ENCODE measurements at regions of chr11 and their contacts with region 1.

Region 1: DNA sequence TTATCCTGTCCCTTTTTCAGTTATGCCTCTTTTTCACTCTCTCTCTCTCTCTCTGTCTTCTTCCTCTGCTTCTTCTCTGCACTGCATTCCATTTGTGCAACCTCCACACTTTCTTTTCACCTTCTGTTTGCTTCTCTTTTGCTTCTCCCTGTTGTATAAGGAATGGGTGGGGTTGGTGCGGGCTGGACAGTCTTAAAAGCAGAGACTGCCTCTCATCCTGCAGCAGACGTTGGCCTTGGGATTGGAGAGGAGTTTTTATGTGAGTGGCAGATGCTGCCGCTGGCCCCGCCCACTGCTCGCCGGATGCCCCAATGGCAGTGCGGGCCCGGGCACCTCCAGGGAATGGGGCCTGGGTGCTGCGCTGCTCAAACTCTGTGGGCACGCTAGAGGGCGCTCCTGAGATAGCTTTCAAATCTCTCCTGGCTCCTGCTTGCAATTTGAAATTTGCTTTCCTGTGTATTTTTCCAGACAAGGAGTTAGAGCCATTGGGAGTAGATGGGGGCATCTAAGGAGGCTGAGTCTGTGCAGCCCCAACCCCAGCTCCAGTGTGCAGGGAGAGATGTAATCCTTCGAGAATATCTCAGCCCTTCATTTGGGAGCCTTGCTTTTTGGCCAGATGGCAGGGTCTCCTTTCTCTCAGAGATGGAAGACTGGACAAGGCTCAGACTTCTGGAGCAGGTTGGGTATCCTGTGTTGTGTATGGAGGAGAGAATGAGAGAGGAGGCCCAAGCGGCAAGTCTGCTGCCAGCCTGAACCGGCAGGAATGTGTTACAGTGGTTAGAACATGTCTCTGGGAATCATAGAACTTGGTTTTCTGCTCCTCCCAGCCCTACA is 81.2 kb downstream of the GRAMD1B start:
- DNase-seq: peak; percentile 35 to 83 (median 52)
- ATAC-seq: peak; percentile 99
- H3K4me3 ChIP-seq: no peak overlapping the region
- H3K4me3 Mint-ChIP-seq: no peak overlapping the region
- H3K27ac ChIP-seq: no peak overlapping the region
- H3K27ac Mint-ChIP-seq: no peak overlapping the region
- H3K4me1 ChIP-seq: peaks cover 4% of the 10 kb centered on the region
- H3K4me1 Mint-ChIP-seq: peaks cover 6% of the 10 kb centered on the region
- H3K27me3 ChIP-seq: no peaks in the 10 kb centered on the region
- H3K27me3 Mint-ChIP-seq: no peaks in the 10 kb centered on the region
- CTCF ChIP-seq: peak; percentile 85

Region 2: DNA sequence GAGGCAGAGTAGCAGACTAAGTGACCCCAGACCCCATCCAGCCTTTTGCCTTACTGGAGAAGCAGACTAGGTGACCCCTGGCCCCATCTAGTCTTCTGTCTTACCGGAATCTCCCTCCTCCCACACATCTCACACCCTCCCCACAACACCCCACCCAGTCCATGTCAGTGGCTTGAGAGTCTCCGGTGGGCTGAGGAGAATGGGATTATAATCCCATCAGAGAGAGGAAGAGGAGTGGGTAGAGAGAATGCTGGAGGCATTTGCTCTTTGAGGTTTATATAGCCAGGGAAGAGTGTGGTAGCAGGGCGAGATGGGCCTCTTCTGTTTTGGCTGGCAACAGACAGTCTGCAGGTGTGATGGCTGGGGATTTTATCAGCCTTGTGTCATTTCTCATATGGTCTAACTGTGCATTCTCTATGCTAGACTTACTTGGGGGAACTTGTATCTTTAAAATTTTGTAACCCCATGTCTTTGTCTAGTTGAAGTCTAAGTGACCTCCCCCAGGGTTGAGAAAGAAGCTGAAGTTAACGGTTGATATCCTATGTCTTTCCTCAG is 30.9 kb before region 1 on chr11:
- CTCF ChIA-PET with region 1: no interaction called
- POLR2A ChIA-PET with region 1: no interaction called
- intact Hi-C with region 1: no loop called
- DNase-seq: no peak
- ATAC-seq: no peak
- H3K4me3 ChIP-seq: no peak overlapping the region
- H3K4me3 Mint-ChIP-seq: no peak overlapping the region
- H3K27ac ChIP-seq: no peak overlapping the region
- H3K27ac Mint-ChIP-seq: no peak overlapping the region
- H3K4me1 ChIP-seq: peaks cover 11% of the 10 kb centered on the region
- H3K4me1 Mint-ChIP-seq: no peaks in the 10 kb centered on the region
- H3K27me3 ChIP-seq: no peaks in the 10 kb centered on the region
- H3K27me3 Mint-ChIP-seq: no peaks in the 10 kb centered on the region
- CTCF ChIP-seq: no peak

Region 3: GRCh38 chr11:123494195-123495050 is 16.8 kb before region 1 on chr11:
- CTCF ChIA-PET with region 1: no interaction called
- POLR2A ChIA-PET with region 1: no interaction called
- intact Hi-C with region 1: no loop called
- DNase-seq: no peak
- ATAC-seq: no peak
- H3K4me3 ChIP-seq: no peak overlapping the region
- H3K4me3 Mint-ChIP-seq: no peak overlapping the region
- H3K27ac ChIP-seq: no peak overlapping the region
- H3K27ac Mint-ChIP-seq: no peak overlapping the region
- H3K4me1 ChIP-seq: no peaks in the 10 kb centered on the region
- H3K4me1 Mint-ChIP-seq: no peaks in the 10 kb centered on the region
- H3K27me3 ChIP-seq: no peaks in the 10 kb centered on the region
- H3K27me3 Mint-ChIP-seq: no peaks in the 10 kb centered on the region
- CTCF ChIP-seq: no peak

Region 4: GRCh38 chr11:123580557-123581275 is 69.5 kb after region 1 on chr11:
- CTCF ChIA-PET with region 1: no interaction called
- POLR2A ChIA-PET with region 1: no interaction called
- intact Hi-C with region 1: loop called (anchors 2 kb)
- DNase-seq: peak; percentile 40 to 83 (median 58)
- ATAC-seq: peak; percentile 97
- H3K4me3 ChIP-seq: no peak overlapping the region
- H3K4me3 Mint-ChIP-seq: no peak overlapping the region
- H3K27ac ChIP-seq: no peak overlapping the region
- H3K27ac Mint-ChIP-seq: no peak overlapping the region
- H3K4me1 ChIP-seq: peaks cover 20% of the 10 kb centered on the region
- H3K4me1 Mint-ChIP-seq: peaks cover 20% of the 10 kb centered on the region
- H3K27me3 ChIP-seq: no peaks in the 10 kb centered on the region
- H3K27me3 Mint-ChIP-seq: no peaks in the 10 kb centered on the region
- CTCF ChIP-seq: peak; percentile 96

Measured in CD4-positive, alpha-beta T cell (primary cell).